Astrocyte of the cerebellum (primary cell): ENCODE measurements at regions of chr7 and their contacts with region 1.

Region 1: DNA sequence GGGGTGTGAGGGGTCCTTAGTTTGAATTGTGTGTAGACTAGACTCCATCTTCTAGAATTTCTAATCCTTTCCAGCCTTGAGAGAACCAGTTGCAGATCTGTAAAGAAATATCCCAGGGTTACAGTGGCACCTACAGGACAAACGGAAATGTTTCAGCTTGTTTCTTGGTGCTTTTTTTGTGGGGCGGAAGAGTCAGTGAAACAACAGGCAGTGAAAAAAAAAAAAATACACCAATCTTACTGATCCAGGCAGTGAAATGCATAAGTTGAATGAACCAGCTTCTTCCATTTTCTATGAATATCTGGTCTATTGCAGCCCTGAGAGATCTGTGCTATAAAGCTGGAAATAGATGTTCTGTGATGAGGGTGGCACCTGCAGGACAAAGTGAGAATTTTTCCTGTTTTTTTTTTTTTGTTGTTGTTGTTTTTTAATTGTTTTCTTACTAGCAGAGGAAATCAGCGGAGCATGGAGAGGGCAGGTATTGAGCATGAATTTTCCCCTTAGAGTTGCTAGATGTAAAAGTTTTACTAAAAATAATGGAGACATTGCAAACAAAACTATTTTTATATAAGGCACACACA is 81.9 kb upstream of the DYNC1I1 start:
- DNase-seq: peak; percentile 34
- H3K4me3 ChIP-seq: no peak overlapping the region
- CTCF ChIP-seq: peak; percentile 54

Region 2: DNA sequence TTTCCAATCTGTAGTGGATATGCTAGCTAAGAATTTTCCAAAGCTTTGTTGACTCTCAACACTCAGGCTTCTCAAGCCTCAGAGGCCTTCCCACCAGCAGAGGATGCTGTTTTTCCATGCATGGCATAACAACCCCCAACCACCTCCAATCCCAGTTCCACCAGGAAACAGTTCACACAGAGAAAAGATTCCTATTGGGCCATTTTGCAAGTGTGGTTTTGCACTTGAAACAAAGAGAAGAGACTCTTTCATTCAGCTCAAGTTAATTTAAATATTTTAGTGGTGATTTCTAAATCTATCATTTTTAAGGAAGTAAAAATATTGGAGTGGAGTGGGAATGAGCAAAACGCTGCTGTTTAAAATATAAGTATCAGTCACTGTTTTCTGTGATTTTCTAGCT is 1401.4 kb before region 1 on chr7:
- in situ Hi-C with region 1: loop called (anchors 25 kb)
- DNase-seq: peak; percentile 87
- H3K4me3 ChIP-seq: no peak overlapping the region
- CTCF ChIP-seq: peak; percentile 100

Region 3: GRCh38 chr7:94436018-94436604 is 1254.3 kb before region 1 on chr7:
- in situ Hi-C with region 1: loop called (anchors 25 kb)
- DNase-seq: peak; percentile 78
- H3K4me3 ChIP-seq: no peak overlapping the region
- CTCF ChIP-seq: peak; percentile 82

Region 4: GRCh38 chr7:95520136-95520535 is 170.3 kb before region 1 on chr7:
- in situ Hi-C with region 1: loop called (anchors 5 kb)
- DNase-seq: no peak
- H3K4me3 ChIP-seq: no peak overlapping the region
- CTCF ChIP-seq: no peak